IMR-90 (cell line): ENCODE measurements at regions of chr16 and their contacts with region 1.

Region 1: GRCh38 chr16:12067714-12068401 is 91.3 kb downstream of the SNX29 start:
- DNase-seq: peak; percentile 85
- ATAC-seq: peak; percentile 97
- H3K4me3 ChIP-seq: no peak overlapping the region
- H3K27ac ChIP-seq: no peak overlapping the region
- H3K4me1 ChIP-seq: peaks cover 2% of the 10 kb centered on the region
- H3K27me3 ChIP-seq: no peaks in the 10 kb centered on the region
- CTCF ChIP-seq: peak; percentile 97
- POLR2A ChIP-seq: no peak
- RAD21 ChIP-seq: peak; percentile 95

Region 2: DNA sequence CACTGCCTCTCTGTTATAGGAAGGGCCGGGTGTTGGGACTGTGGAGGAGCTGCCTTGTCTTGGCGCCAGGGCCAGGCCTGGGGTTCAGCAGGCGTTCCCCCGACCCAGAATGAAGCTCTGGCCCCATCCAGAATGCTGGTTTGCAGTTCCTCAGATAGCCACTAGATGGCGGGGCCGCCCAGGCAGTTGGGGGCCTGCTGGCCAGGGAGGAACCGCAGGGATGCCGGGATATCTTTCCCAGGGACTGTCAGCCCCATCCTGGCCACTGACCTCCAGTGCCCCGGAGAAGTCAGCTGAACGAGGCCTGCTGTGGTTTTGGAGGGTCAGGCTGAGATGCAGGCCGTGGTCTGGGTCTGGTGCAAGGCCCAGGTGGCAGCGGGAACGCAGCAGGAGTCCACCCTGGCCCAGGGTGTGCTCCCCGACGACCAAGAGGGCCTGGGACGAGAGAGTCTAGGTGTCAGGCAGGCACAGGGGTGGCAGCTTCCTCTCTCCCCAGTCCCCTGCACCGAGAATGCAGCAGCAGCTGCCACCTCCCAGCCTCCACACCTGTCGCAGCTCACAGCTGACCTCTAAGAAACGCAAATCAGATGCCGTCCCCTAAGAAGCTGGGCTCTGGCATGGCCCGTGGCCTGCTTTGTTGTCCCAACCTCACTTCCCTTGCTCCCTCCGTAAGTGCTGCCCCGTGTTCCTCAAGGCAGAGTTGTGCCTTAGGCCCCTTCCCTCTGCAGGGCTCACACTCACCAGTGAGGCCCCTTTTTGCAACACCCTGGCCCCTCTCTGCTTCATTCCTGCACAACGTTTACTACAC is 671.4 kb before region 1 on chr16:
- CTCF ChIA-PET with region 1: no interaction called
- POLR2A ChIA-PET with region 1: no interaction called
- dilution Hi-C with region 1: no loop called
- in situ Hi-C with region 1: no loop called
- intact Hi-C with region 1: loop called (anchors 10 kb)
- DNase-seq: peak; percentile 60
- ATAC-seq: peak; percentile 99
- H3K4me3 ChIP-seq: no peak overlapping the region
- H3K27ac ChIP-seq: no peak overlapping the region
- H3K4me1 ChIP-seq: peaks cover 3% of the 10 kb centered on the region; the same call in 1 of the 2 replicates
- H3K27me3 ChIP-seq: peaks cover 2% of the 10 kb centered on the region; the same call in 1 of the 2 replicates
- CTCF ChIP-seq: peak; percentile 96
- POLR2A ChIP-seq: peak; percentile 50; the same call in 1 of the 2 replicates
- RAD21 ChIP-seq: peak; percentile 98

Region 3: GRCh38 chr16:11727796-11728543 is 339.9 kb before region 1 on chr16:
- CTCF ChIA-PET with region 1: no interaction called
- POLR2A ChIA-PET with region 1: no interaction called
- dilution Hi-C with region 1: no loop called
- in situ Hi-C with region 1: no loop called
- intact Hi-C with region 1: no loop called
- DNase-seq: no peak
- ATAC-seq: no peak
- H3K4me3 ChIP-seq: no peak overlapping the region
- H3K27ac ChIP-seq: no peak overlapping the region
- H3K4me1 ChIP-seq: peaks cover 5% of the 10 kb centered on the region
- H3K27me3 ChIP-seq: no peaks in the 10 kb centered on the region
- CTCF ChIP-seq: no peak
- POLR2A ChIP-seq: no peak
- RAD21 ChIP-seq: no peak

Region 4: DNA sequence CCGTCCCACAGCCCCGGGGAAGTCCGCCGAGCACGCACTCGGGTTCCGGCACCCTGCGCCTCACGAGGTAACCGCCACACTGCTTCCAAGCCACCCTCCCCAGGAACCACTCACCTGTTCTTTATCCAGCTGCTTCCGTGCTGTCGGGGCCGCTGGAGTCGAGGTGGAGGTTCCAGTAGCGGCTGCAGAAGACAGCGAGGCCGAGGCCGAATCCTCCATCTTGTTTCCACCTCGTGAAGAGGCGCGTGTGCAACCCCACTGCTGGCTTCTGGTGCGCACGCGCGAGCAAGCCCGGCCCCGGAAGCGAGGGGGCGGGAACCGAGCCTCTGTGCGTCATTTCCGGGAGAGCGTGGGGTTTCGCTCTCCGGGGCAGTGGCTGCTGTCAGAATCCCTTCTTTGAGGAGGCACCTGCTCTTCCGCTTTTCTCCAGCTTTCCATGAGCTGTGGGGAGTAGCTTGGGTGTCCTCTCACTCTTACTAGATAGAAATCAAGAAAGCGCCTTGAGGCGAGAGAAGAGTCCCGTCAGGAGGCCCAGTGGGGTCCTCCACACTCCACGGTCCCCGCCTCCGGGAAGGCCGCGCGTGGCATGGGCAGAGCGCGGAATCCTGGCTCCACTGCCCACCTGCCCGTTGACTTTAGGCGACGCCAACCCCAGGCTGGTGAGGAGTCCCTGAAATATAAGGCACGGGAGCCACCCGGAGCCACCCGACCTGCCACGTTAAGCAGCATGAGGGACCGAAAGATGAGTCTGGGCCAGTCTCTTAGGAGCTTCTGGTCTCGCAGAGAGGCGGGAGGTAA is 216.4 kb before region 1 on chr16 and contains the start of gene RSL1D1:
- CTCF ChIA-PET with region 1: interaction called, 9 read pairs
- POLR2A ChIA-PET with region 1: no interaction called
- dilution Hi-C with region 1: no loop called
- in situ Hi-C with region 1: no loop called
- intact Hi-C with region 1: loop called (anchors 1 kb)
- DNase-seq: peak; percentile 91
- ATAC-seq: peak; percentile 86
- H3K4me3 ChIP-seq: peak within 1 kb of the TSS; percentile 78
- H3K27ac ChIP-seq: peak within 1 kb of the TSS; percentile 89
- H3K4me1 ChIP-seq: peaks cover 4% of the 10 kb centered on the region
- H3K27me3 ChIP-seq: no peaks in the 10 kb centered on the region
- CTCF ChIP-seq: no peak
- POLR2A ChIP-seq: peak; percentile 86
- RAD21 ChIP-seq: no peak
- total RNA-seq, gene RSL1D1: 77.4 and 137 TPM in 2 replicates

Region 5: DNA sequence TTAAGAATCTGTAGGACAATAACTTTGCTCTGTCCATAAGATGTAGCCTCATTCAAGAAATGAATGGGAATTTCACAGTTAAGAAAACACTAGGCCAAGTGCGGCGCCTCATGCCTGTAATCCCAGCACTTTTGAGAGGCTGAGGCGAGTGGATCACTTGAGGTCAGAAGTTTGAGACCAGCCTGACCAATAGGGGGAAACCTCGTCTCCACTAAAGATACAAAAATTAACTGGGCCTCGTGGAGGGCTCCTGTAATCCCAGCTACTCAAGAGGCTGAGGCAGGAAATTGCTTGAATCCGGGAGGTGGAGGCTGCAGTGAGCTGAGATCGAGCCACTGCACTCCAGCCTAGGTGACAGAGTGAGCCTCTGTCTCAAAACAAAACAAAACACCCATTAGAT is 196.7 kb before region 1 on chr16:
- CTCF ChIA-PET with region 1: interaction called, 3 read pairs
- POLR2A ChIA-PET with region 1: no interaction called
- dilution Hi-C with region 1: no loop called
- in situ Hi-C with region 1: no loop called
- intact Hi-C with region 1: loop called (anchors 5 kb)
- DNase-seq: peak; percentile 30
- ATAC-seq: peak; percentile 50; the same call in 1 of the 2 replicates
- H3K4me3 ChIP-seq: no peak overlapping the region
- H3K27ac ChIP-seq: no peak overlapping the region
- H3K4me1 ChIP-seq: peaks cover 4% of the 10 kb centered on the region; the same call in 1 of the 2 replicates
- H3K27me3 ChIP-seq: no peaks in the 10 kb centered on the region
- CTCF ChIP-seq: 0 out of 2 replicates have a peak, but pooled peaks have one; percentile 7
- POLR2A ChIP-seq: no peak
- RAD21 ChIP-seq: no peak

Region 6: DNA sequence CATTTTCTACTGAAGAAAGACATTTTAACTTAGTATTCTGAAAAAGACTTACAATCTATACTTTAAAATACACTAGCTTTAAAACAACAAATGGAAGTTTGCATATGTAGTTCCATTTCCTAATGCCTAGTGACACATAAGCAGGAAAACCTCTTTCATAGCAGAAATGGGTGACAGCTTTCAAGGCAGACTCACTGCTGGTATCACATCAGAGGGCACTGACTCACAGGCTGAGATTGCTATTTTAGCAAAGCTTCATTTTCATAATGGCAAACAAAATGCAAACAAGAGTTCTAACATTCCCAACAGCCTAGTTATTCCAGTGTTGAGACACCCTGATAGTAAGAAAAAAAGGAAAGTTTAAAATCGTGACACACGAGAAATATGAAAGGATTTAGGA is 171.1 kb before region 1 on chr16:
- CTCF ChIA-PET with region 1: interaction called, 6 read pairs
- POLR2A ChIA-PET with region 1: no interaction called
- dilution Hi-C with region 1: no loop called
- in situ Hi-C with region 1: no loop called
- intact Hi-C with region 1: loop called (anchors 5 kb)
- DNase-seq: peak; percentile 92
- ATAC-seq: peak; percentile 94
- H3K4me3 ChIP-seq: no peak overlapping the region
- H3K27ac ChIP-seq: peak overlapping the region; percentile 28; the same call in 1 of the 2 replicates
- H3K4me1 ChIP-seq: peaks cover 4% of the 10 kb centered on the region
- H3K27me3 ChIP-seq: no peaks in the 10 kb centered on the region
- CTCF ChIP-seq: no peak
- POLR2A ChIP-seq: no peak
- RAD21 ChIP-seq: no peak

Region 7: DNA sequence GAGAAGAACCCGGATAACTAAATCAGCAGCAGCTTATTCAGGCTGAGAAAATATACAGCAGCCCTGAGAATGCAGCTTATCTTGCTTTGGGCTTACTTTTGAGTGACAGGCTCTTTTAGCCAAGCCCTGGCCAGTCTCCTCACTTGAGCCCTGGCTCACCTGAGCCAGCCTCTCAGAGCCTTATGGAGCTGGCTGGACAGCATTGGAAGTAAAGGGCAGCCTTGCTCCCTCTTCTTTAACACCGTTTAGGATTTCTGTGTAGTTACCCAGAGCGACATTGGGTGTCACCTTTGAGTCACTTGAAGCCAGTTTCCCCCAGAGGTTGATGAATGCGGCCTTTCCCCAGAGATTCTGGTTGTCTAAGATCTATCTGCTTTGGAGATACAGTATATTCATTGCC is 118.3 kb before region 1 on chr16:
- CTCF ChIA-PET with region 1: interaction called, 15 read pairs
- POLR2A ChIA-PET with region 1: no interaction called
- dilution Hi-C with region 1: no loop called
- in situ Hi-C with region 1: no loop called
- intact Hi-C with region 1: loop called (anchors 1 kb)
- DNase-seq: peak; percentile 47
- ATAC-seq: peak; percentile 83
- H3K4me3 ChIP-seq: no peak overlapping the region
- H3K27ac ChIP-seq: no peak overlapping the region
- H3K4me1 ChIP-seq: peaks cover 6% of the 10 kb centered on the region
- H3K27me3 ChIP-seq: no peaks in the 10 kb centered on the region
- CTCF ChIP-seq: peak; percentile 57
- POLR2A ChIP-seq: no peak
- RAD21 ChIP-seq: peak; percentile 68

Region 8: DNA sequence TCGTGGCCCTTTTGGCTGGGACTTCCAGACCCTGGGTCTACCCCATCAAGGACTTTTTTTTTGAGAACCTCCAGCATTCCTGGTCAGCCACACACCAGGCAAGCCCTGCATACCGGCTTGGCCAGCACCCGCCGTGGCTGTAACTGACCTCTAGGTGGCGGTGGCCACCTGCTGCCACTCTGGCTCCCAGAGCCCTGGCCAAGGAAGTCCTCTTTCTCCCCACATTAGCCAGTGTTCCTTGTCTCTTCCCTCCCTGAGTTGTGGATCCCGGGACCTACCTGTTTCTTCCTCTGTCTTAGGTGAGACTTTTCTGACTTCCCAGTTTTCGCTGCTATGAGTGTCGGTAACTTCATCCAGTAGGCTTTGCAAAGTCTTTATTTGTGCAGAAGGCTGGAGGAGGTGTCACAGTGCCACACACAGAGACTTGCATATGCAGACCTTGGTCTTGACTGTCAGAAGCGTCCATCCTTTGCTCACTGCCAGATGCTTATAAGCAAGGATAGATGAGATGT is 387.5 kb after region 1 on chr16:
- CTCF ChIA-PET with region 1: no interaction called
- POLR2A ChIA-PET with region 1: no interaction called
- dilution Hi-C with region 1: no loop called
- in situ Hi-C with region 1: no loop called
- intact Hi-C with region 1: no loop called
- DNase-seq: peak; percentile 55
- ATAC-seq: peak; percentile 100
- H3K4me3 ChIP-seq: no peak overlapping the region
- H3K27ac ChIP-seq: no peak overlapping the region
- H3K4me1 ChIP-seq: no peaks in the 10 kb centered on the region
- H3K27me3 ChIP-seq: no peaks in the 10 kb centered on the region
- CTCF ChIP-seq: peak; percentile 89
- POLR2A ChIP-seq: no peak
- RAD21 ChIP-seq: peak; percentile 94